Activated T-helper 2 cell treated with anti-CD3 and anti-CD28 coated beads, Interferon-gamma antibody, Interleukin-2, Interleukin-4, amounts not matched to agents 10 μg/mL and 5 μg/mL and 100 μg/mL, durations not matched to agents 14 hours and 24 hours and 36 hours (primary cell): ENCODE measurements at regions of chr1 and their contacts with region 1.

Region 1: DNA sequence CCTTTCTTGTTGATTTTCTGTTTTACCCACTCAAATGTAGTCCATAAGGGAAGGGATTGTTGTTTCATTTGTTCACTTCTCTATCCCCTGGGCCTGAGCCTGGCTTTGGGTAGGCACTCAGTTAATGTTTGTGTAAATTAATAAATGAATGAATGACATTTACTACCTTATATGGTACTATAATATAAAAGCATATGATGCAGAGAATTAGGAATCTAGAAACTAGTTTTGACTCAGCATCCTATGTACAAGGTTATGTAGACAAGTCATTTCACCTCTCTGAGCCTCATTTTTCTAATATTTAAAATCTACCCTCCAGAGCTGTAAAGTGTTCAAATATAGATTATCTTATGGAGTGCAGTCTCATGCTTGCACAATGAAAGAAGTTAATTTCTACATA is 68.9 kb upstream of the S1PR1 start:
- DNase-seq: no peak
- H3K4me3 Mint-ChIP-seq: no peak overlapping the region
- H3K27ac Mint-ChIP-seq: peak overlapping the region; percentile 28
- H3K4me1 Mint-ChIP-seq: peaks cover 38% of the 10 kb centered on the region
- H3K27me3 Mint-ChIP-seq: no peaks in the 10 kb centered on the region

Region 2: GRCh38 chr1:101153692-101154091 is 14.2 kb before region 1 on chr1:
- intact Hi-C with region 1: loop called (anchors 2 kb)
- DNase-seq: no peak
- H3K4me3 Mint-ChIP-seq: no peak overlapping the region
- H3K27ac Mint-ChIP-seq: peak overlapping the region; percentile 36
- H3K4me1 Mint-ChIP-seq: peaks cover 44% of the 10 kb centered on the region
- H3K27me3 Mint-ChIP-seq: no peaks in the 10 kb centered on the region

Region 3: GRCh38 chr1:101238681-101239094 is 70.8 kb after region 1 on chr1:
- intact Hi-C with region 1: no loop called
- DNase-seq: peak; percentile 80
- H3K4me3 Mint-ChIP-seq: peak overlapping the region; percentile 99
- H3K27ac Mint-ChIP-seq: peak overlapping the region; percentile 96
- H3K4me1 Mint-ChIP-seq: peaks cover 61% of the 10 kb centered on the region
- H3K27me3 Mint-ChIP-seq: no peaks in the 10 kb centered on the region